ENCODE measurements at regions of chr19 and their contacts with region 1.

Region 1: GRCh38 chr19:5138606-5139582 is 170.0 kb downstream of the KDM4B start:
- DNase-seq: no peak
- H3K4me3 ChIP-seq: no peak overlapping the region
- H3K27ac ChIP-seq: no peak overlapping the region
- H3K4me1 ChIP-seq: peaks cover 10% of the 10 kb centered on the region
- CTCF ChIP-seq: no peak

Region 2: DNA sequence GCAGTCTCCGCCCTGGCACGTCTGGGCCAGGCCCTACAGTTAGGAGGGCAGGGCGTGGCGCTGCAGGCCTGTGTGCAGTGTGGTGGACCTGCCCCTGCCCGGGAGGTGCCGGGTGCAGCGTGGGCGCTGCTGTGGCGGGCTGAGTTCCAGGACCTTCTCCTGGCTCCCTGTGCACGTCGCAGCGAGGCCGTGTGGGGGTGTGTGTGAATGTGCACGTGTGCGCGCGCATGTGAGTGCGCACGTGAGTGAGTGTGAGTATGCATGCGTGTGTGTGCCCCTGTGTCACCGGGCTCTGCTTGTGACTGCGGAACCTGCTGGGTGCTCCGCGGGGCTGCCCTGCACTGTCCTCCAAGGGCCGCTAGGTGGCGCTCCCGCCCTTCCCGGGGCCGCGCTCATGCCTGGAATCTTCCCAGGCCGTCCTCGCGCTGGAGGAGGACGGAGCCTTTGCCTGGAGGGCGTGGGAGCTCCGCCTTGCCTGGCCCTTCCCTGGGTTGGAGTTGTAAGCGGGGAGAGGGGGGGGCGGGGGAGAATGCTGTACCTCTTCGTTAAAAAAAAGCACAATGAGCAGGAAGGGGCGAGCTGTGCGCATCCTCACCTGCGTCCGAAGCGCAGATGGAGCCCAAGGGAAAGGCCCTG is 90.7 kb before region 1 on chr19:
- CTCF ChIA-PET with region 1: no interaction called
- POLR2A ChIA-PET with region 1: no interaction called
- intact Hi-C with region 1: loop called (anchors 10 kb)
- DNase-seq: peak; percentile 46
- H3K4me3 ChIP-seq: no peak overlapping the region
- H3K27ac ChIP-seq: no peak overlapping the region
- H3K4me1 ChIP-seq: no peaks in the 10 kb centered on the region
- CTCF ChIP-seq: peak; percentile 87

Region 3: GRCh38 chr19:5068233-5069072 is 70.4 kb before region 1 on chr19:
- CTCF ChIA-PET with region 1: no interaction called
- POLR2A ChIA-PET with region 1: no interaction called
- intact Hi-C with region 1: no loop called
- DNase-seq: no peak
- H3K4me3 ChIP-seq: no peak overlapping the region
- H3K27ac ChIP-seq: no peak overlapping the region
- H3K4me1 ChIP-seq: no peaks in the 10 kb centered on the region
- CTCF ChIP-seq: no peak

Region 4: GRCh38 chr19:5103061-5103701 is 35.7 kb before region 1 on chr19:
- CTCF ChIA-PET with region 1: no interaction called
- POLR2A ChIA-PET with region 1: no interaction called
- intact Hi-C with region 1: no loop called
- DNase-seq: no peak
- H3K4me3 ChIP-seq: no peak overlapping the region
- H3K27ac ChIP-seq: no peak overlapping the region
- H3K4me1 ChIP-seq: no peaks in the 10 kb centered on the region
- CTCF ChIP-seq: no peak

Region 5: DNA sequence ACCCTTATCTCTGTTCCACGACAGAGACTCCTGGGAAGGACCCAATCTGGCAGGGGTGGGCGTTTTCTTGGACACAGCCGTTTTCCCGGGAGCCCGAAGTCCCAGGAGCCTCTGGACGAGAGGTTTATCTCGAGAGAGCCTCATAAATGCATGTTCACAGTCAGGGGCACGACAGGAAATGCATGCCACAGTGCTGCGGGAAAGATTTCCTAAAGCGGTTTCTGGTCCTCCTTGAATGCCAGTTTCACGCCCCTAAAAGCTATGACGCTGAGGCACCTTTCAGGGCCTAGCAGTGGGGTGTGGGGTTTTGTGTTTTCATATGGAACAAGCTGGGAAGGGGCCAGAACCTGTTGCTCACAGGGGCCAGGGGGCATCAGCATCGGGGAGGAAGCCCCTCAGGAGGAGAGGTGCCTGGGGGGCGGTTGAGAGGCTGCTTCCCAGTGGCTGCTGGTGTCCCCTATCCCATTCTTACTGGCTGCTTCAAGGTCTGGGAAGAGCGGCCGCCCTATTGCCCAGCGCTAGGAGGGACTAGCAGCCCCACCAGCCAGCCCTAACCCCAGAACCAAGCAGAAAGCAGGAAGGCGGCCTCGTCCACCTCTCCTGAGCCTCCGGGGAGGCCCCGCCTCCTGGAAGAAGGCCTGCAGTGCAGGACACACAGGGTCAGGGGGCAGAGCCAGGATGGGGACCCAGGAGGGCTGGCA is 12.9 kb before region 1 on chr19:
- CTCF ChIA-PET with region 1: no interaction called
- POLR2A ChIA-PET with region 1: no interaction called
- intact Hi-C with region 1: no loop called
- DNase-seq: no peak
- H3K4me3 ChIP-seq: no peak overlapping the region
- H3K27ac ChIP-seq: no peak overlapping the region
- H3K4me1 ChIP-seq: peaks cover 39% of the 10 kb centered on the region
- CTCF ChIP-seq: no peak

Measured in OCI-LY7 (cell line).